CD4-positive, alpha-beta memory T cell (primary cell): ENCODE measurements at regions of chr4 and their contacts with region 1.

Region 1: DNA sequence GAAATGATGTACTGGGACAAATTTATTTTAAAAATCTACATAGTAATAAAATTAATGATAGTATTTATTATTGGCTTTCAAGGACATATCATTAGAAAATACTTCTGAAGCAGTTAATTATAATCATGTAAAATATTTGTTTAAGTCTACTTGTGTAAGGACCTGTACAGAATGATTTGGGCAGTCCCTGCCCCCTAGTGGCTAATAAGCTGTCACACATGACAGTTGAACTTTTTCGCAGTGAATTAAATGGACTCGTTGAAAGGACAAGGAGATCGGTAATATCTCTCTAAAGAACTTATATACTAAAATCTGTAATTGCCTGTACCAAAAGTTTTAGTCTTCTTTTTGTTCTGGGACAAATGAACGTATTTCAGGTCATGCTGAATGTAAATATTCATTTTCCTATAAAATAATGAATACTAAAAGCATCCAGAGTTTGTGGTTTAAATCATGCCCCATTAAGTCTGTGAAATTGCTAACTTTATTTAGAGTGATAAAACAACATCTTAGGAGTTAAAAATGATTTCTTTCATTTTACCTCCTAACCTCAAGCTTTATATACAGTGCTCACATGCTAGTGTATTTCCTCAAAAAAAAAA is 13.6 kb downstream of the EXOC1 start:
- DNase-seq: peak in 4 of 5 donors; percentile 50 to 60 (median 51)
- H3K4me3 ChIP-seq: no peak overlapping the region
- H3K4me3 Mint-ChIP-seq: peak overlapping the region in 1 of 8 donors; percentile 37
- H3K27ac ChIP-seq: no peak overlapping the region
- H3K27ac Mint-ChIP-seq: peak overlapping the region in 2 of 7 donors; percentile 67 to 76
- H3K4me1 ChIP-seq: peaks cover 14% of the 10 kb centered on the region
- H3K4me1 Mint-ChIP-seq: peaks cover 8 to 19% (median 17%) of the 10 kb centered on the region in 4 donors
- H3K27me3 ChIP-seq: no peaks in the 10 kb centered on the region
- H3K27me3 Mint-ChIP-seq: no peaks in the 10 kb centered on the region

Region 2: DNA sequence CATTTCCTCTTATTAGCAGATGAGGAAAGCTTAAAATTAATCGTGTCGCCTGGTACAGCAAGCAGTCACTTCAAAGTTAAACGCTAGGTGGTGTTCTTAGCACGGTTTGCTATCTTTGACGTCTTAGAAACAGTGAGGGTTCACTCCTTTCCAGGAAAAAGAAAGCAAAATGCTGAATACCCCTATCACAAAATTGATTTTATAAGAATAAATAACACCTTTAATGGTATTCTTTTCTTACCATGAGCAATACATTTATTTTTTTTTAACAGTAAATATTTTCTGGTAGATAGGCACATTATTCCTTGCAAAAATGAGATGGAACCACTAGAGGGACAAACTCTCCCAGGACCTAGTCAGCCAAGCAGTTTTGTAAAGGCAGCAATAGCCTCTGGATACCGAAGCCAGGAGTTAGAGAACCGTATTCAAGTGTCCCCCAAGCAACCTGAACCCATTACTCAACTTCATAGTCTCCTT is 895.6 kb before region 1 on chr4:
- CTCF ChIA-PET with region 1: no interaction called
- POLR2A ChIA-PET with region 1: no interaction called
- intact Hi-C with region 1: loop called (anchors 2 kb)
- DNase-seq: peak in 4 of 5 donors; percentile 12 to 24 (median 16)
- H3K4me3 ChIP-seq: no peak overlapping the region
- H3K4me3 Mint-ChIP-seq: no peak overlapping the region
- H3K27ac ChIP-seq: no peak overlapping the region
- H3K27ac Mint-ChIP-seq: no peak overlapping the region
- H3K4me1 ChIP-seq: no peaks in the 10 kb centered on the region
- H3K4me1 Mint-ChIP-seq: no peaks in the 10 kb centered on the region
- H3K27me3 ChIP-seq: no peaks in the 10 kb centered on the region
- H3K27me3 Mint-ChIP-seq: peaks cover 0 to 2% of the 10 kb centered on the region in 2 donors

Region 3: GRCh38 chr4:55184600-55185523 is 682.2 kb before region 1 on chr4:
- CTCF ChIA-PET with region 1: no interaction called
- POLR2A ChIA-PET with region 1: no interaction called
- intact Hi-C with region 1: loop called (anchors 10 kb)
- DNase-seq: peak in 4 of 5 donors; percentile 2 to 17 (median 14)
- H3K4me3 ChIP-seq: no peak overlapping the region
- H3K4me3 Mint-ChIP-seq: no peak overlapping the region
- H3K27ac ChIP-seq: no peak overlapping the region
- H3K27ac Mint-ChIP-seq: no peak overlapping the region
- H3K4me1 ChIP-seq: no peaks in the 10 kb centered on the region
- H3K4me1 Mint-ChIP-seq: no peaks in the 10 kb centered on the region
- H3K27me3 ChIP-seq: no peaks in the 10 kb centered on the region
- H3K27me3 Mint-ChIP-seq: peaks cover 7 to 12% of the 10 kb centered on the region in 2 donors

Region 4: GRCh38 chr4:55312489-55313101 is 554.5 kb before region 1 on chr4:
- CTCF ChIA-PET with region 1: interaction called, 6 read pairs
- POLR2A ChIA-PET with region 1: no interaction called
- intact Hi-C with region 1: loop called (anchors 1 kb)
- DNase-seq: peak in 4 of 5 donors; percentile 24 to 39 (median 30)
- H3K4me3 ChIP-seq: no peak overlapping the region
- H3K4me3 Mint-ChIP-seq: no peak overlapping the region
- H3K27ac ChIP-seq: no peak overlapping the region
- H3K27ac Mint-ChIP-seq: no peak overlapping the region
- H3K4me1 ChIP-seq: no peaks in the 10 kb centered on the region
- H3K4me1 Mint-ChIP-seq: no peaks in the 10 kb centered on the region
- H3K27me3 ChIP-seq: no peaks in the 10 kb centered on the region
- H3K27me3 Mint-ChIP-seq: no peaks in the 10 kb centered on the region

Region 5: GRCh38 chr4:55444827-55445226 is 422.2 kb before region 1 on chr4:
- CTCF ChIA-PET with region 1: interaction called, 4 read pairs
- POLR2A ChIA-PET with region 1: no interaction called
- intact Hi-C with region 1: loop called (anchors 5 kb)
- DNase-seq: no peak
- H3K4me3 ChIP-seq: no peak overlapping the region
- H3K4me3 Mint-ChIP-seq: no peak overlapping the region
- H3K27ac ChIP-seq: no peak overlapping the region
- H3K27ac Mint-ChIP-seq: peak overlapping the region in 1 of 7 donors; percentile 36
- H3K4me1 ChIP-seq: peaks cover 10% of the 10 kb centered on the region
- H3K4me1 Mint-ChIP-seq: peaks cover 6 to 12% (median 9%) of the 10 kb centered on the region in 4 donors
- H3K27me3 ChIP-seq: no peaks in the 10 kb centered on the region
- H3K27me3 Mint-ChIP-seq: no peaks in the 10 kb centered on the region

Region 6: DNA sequence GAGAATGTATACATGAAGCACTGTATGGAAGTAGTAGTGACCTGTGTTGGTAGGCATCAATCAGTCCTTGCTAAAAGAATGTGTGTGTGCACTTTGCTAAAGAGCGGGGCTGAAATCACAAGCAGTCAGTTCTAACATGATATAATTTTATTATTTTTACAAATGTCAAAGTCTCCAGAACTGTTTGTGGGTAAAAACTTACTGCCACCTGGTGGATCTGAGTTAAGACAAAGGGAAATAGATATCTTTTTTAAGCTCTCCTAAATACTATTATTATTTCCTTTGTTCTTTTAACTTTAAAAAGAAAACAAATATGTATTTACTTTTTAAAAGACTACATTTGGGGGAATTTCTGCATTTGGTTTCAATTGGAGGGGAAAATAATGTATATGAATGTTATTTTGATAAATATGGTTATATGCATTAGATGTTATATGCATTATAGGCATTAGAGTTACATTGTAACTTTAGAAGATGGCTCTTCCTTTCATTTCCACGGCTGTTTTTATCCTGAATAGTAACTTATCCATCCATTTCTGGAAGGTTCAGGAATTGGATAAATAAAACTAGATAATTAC is 312.5 kb before region 1 on chr4:
- CTCF ChIA-PET with region 1: no interaction called
- POLR2A ChIA-PET with region 1: no interaction called
- intact Hi-C with region 1: loop called (anchors 2 kb)
- DNase-seq: peak in 4 of 5 donors; percentile 36 to 48 (median 41)
- H3K4me3 ChIP-seq: no peak overlapping the region
- H3K4me3 Mint-ChIP-seq: no peak overlapping the region
- H3K27ac ChIP-seq: no peak overlapping the region
- H3K27ac Mint-ChIP-seq: no peak overlapping the region
- H3K4me1 ChIP-seq: peaks cover 9% of the 10 kb centered on the region
- H3K4me1 Mint-ChIP-seq: peaks cover 3 to 19% (median 8%) of the 10 kb centered on the region in 4 donors
- H3K27me3 ChIP-seq: no peaks in the 10 kb centered on the region
- H3K27me3 Mint-ChIP-seq: peaks cover 6 to 9% of the 10 kb centered on the region in 2 donors

Region 7: DNA sequence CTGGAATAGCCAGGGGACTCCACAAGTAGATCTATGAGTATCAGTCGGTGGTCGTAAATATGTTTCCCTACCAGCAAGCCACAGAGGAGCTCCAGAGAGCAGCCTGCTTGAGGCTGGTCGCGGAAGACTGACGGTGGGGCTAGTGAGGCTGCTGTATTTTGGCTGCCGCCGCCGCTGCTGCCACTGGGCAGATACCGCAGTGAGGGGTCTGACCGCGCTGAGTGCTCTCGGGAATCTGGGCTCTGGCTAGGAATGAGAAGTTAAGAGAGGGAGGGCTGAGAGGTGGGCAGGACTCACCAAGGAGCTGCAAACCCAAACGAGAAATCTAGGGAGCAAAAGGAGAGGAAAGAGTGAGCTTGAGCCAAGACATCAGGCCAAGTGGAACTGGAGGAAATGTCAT is 47.4 kb before region 1 on chr4 and contains the start of gene EXOC1L:
- CTCF ChIA-PET with region 1: no interaction called
- POLR2A ChIA-PET with region 1: no interaction called
- intact Hi-C with region 1: no loop called
- DNase-seq: no peak
- H3K4me3 ChIP-seq: no peak within 1 kb of the TSS
- H3K4me3 Mint-ChIP-seq: peak within 1 kb of the TSS in 7 of 8 donors; percentile 11 to 71 (median 59)
- H3K27ac ChIP-seq: no peak within 1 kb of the TSS
- H3K27ac Mint-ChIP-seq: peak within 1 kb of the TSS in 2 of 7 donors; percentile 22 to 43
- H3K4me1 ChIP-seq: no peaks in the 10 kb centered on the region
- H3K4me1 Mint-ChIP-seq: peaks cover 5 to 8% (median 7%) of the 10 kb centered on the region in 4 donors
- H3K27me3 ChIP-seq: no peaks in the 10 kb centered on the region
- H3K27me3 Mint-ChIP-seq: peaks cover 9 to 13% of the 10 kb centered on the region in 2 donors
- total RNA-seq, gene EXOC1L: not detected

Region 8: GRCh38 chr4:55853484-55854046 is 13.5 kb before region 1 on chr4 and contains the start of gene EXOC1:
- CTCF ChIA-PET with region 1: interaction called, 29 read pairs
- POLR2A ChIA-PET with region 1: interaction called, 9 read pairs
- intact Hi-C with region 1: no loop called
- DNase-seq: peak; percentile 93 to 96 (median 93)
- H3K4me3 ChIP-seq: peak within 1 kb of the TSS; percentile 83 to 97
- H3K4me3 Mint-ChIP-seq: peak within 1 kb of the TSS in 4 of 8 donors; percentile 40 to 67 (median 46)
- H3K27ac ChIP-seq: peak within 1 kb of the TSS; percentile 81
- H3K27ac Mint-ChIP-seq: peak within 1 kb of the TSS in 5 of 7 donors; percentile 36 to 96 (median 84)
- H3K4me1 ChIP-seq: peaks cover 44% of the 10 kb centered on the region
- H3K4me1 Mint-ChIP-seq: peaks cover 30 to 47% (median 38%) of the 10 kb centered on the region in 4 donors
- H3K27me3 ChIP-seq: no peaks in the 10 kb centered on the region
- H3K27me3 Mint-ChIP-seq: no peaks in the 10 kb centered on the region
- total RNA-seq, gene EXOC1: 41.9 to 50.7 TPM